GM12878 (cell line): ENCODE measurements at regions of chr10 and their contacts with region 1.

Region 1: GRCh38 chr10:97072851-97073665 is 112.7 kb downstream of the SLIT1 start:
- DNase-seq: peak; percentile 13
- ATAC-seq: peak; percentile 94
- H3K4me3 ChIP-seq: no peak overlapping the region
- H3K27ac ChIP-seq: no peak overlapping the region
- H3K4me1 ChIP-seq: no peaks in the 10 kb centered on the region
- H3K27me3 ChIP-seq: peaks cover 0 to 4% of the 10 kb centered on the region in 2 experiments; a peak in 2 of 4 replicates
- CTCF ChIP-seq: peak; percentile 94 to 96 (median 95)
- EP300 ChIP-seq: no peak
- POLR2A ChIP-seq: no peak
- RAD21 ChIP-seq: peak; percentile 97

Region 2: GRCh38 chr10:96814264-96814663 is 258.8 kb before region 1 on chr10:
- CTCF ChIA-PET with region 1: no interaction called
- POLR2A ChIA-PET with region 1: no interaction called
- RAD21 ChIA-PET with region 1: no interaction called
- SMC1A ChIA-PET with region 1: no interaction called
- in situ Hi-C with region 1: no loop called
- intact Hi-C with region 1: no loop called
- DNase-seq: no peak
- ATAC-seq: no peak
- H3K4me3 ChIP-seq: no peak overlapping the region
- H3K27ac ChIP-seq: no peak overlapping the region
- H3K4me1 ChIP-seq: no peaks in the 10 kb centered on the region
- H3K27me3 ChIP-seq: no peaks in the 10 kb centered on the region
- CTCF ChIP-seq: no peak
- EP300 ChIP-seq: no peak
- POLR2A ChIP-seq: no peak
- RAD21 ChIP-seq: no peak

Region 3: DNA sequence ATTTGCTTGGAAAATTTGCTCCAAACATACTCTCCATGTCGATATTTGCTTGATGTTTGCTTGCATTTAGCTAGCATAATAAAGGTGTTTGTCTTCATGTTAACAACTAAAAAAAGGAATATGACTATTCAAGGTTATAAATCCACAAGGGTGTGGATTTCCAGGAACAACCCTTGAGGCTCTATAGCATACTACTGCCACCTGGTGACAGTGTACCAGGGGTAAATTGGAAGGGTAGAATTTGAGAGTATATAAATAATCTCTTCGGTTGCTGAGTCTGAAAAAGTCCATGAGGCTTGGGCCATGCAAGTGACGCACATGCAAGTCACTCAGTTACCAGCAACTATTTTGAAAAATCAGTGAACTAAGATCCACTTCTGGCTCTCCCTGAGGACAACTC is 44.3 kb after region 1 on chr10:
- CTCF ChIA-PET with region 1: interaction called, 103 read pairs
- POLR2A ChIA-PET with region 1: no interaction called
- RAD21 ChIA-PET with region 1: interaction called, 35 read pairs
- SMC1A ChIA-PET with region 1: interaction called, 31 read pairs
- in situ Hi-C with region 1: no loop called
- intact Hi-C with region 1: loop called (anchors 5 kb)
- DNase-seq: no peak
- ATAC-seq: peak; percentile 65
- H3K4me3 ChIP-seq: no peak overlapping the region
- H3K27ac ChIP-seq: no peak overlapping the region
- H3K4me1 ChIP-seq: no peaks in the 10 kb centered on the region
- H3K27me3 ChIP-seq: no peaks in the 10 kb centered on the region; a peak in 2 of 4 replicates
- CTCF ChIP-seq: peak in 2 of 3 experiments; percentile 25 to 56; a peak in 3 of 6 replicates
- EP300 ChIP-seq: no peak
- POLR2A ChIP-seq: no peak
- RAD21 ChIP-seq: peak; percentile 47

Region 4: GRCh38 chr10:97196223-97197029 is 123.4 kb after region 1 on chr10:
- CTCF ChIA-PET with region 1: interaction called, 651 read pairs
- POLR2A ChIA-PET with region 1: no interaction called
- RAD21 ChIA-PET with region 1: interaction called, 23 read pairs
- SMC1A ChIA-PET with region 1: interaction called, 24 read pairs
- in situ Hi-C with region 1: no loop called
- intact Hi-C with region 1: loop called (anchors 1 kb)
- DNase-seq: no peak
- ATAC-seq: peak; percentile 91
- H3K4me3 ChIP-seq: peak overlapping the region; percentile 79
- H3K27ac ChIP-seq: no peak overlapping the region
- H3K4me1 ChIP-seq: peaks cover 14% of the 10 kb centered on the region
- H3K27me3 ChIP-seq: no peaks in the 10 kb centered on the region; a peak in 1 of 4 replicates
- CTCF ChIP-seq: peak; percentile 76 to 94 (median 81)
- EP300 ChIP-seq: no peak
- POLR2A ChIP-seq: no peak
- RAD21 ChIP-seq: peak; percentile 63

Region 5: DNA sequence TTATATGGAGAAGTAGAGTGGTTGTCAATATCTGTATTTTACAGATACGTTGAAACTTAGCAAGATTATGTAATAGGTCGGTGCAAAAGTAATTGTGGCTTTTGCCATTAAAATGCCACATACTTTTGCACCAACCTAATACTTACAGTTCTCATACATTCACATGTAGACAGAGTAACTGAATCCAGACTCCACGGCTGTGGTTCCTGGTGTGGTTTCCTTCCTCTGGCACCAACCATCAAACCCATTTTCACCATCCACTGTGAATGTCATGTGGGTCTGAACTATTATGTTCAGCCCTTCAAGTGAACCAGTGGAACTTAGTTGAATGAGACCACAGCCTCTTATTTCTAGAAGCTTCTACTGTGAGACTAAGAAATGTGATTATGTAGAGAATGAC is 144.2 kb after region 1 on chr10:
- CTCF ChIA-PET with region 1: interaction called, 651 read pairs
- POLR2A ChIA-PET with region 1: interaction called, 4 read pairs
- RAD21 ChIA-PET with region 1: interaction called, 128 read pairs
- SMC1A ChIA-PET with region 1: interaction called, 112 read pairs
- in situ Hi-C with region 1: no loop called
- intact Hi-C with region 1: no loop called
- DNase-seq: no peak
- ATAC-seq: no peak
- H3K4me3 ChIP-seq: no peak overlapping the region
- H3K27ac ChIP-seq: no peak overlapping the region
- H3K4me1 ChIP-seq: peaks cover 7% of the 10 kb centered on the region; the same call in 1 of the 2 replicates
- H3K27me3 ChIP-seq: no peaks in the 10 kb centered on the region
- CTCF ChIP-seq: no peak
- EP300 ChIP-seq: no peak
- POLR2A ChIP-seq: no peak
- RAD21 ChIP-seq: no peak